ENCODE measurements at regions of chr12 and their contacts with region 1.

Region 1: GRCh38 chr12:6470375-6471163 is at the start of gene VAMP1:
- DNase-seq: peak; percentile 92
- ATAC-seq: peak; percentile 96
- H3K4me3 ChIP-seq: peak within 1 kb of the TSS; percentile 99
- H3K27ac ChIP-seq: peak within 1 kb of the TSS; percentile 63
- H3K4me1 ChIP-seq: peaks cover 18% of the 10 kb centered on the region
- H3K27me3 ChIP-seq: no peaks in the 10 kb centered on the region
- CTCF ChIP-seq: no peak
- EP300 ChIP-seq: no peak
- POLR2A ChIP-seq: peak; percentile 100
- RAD21 ChIP-seq: no peak
- polyA plus RNA-seq, gene VAMP1: 4.8 to 8.8 TPM

Region 2: GRCh38 chr12:6323340-6323994 is 147.1 kb before region 1 on chr12:
- CTCF ChIA-PET with region 1: interaction called, 27 read pairs
- POLR2A ChIA-PET with region 1: interaction called, 5 read pairs
- RAD21 ChIA-PET with region 1: interaction called, 15 read pairs
- SMC1A ChIA-PET with region 1: interaction called, 14 read pairs
- in situ Hi-C with region 1: no loop called
- intact Hi-C with region 1: loop called (anchors 5 kb)
- DNase-seq: peak; percentile 71
- ATAC-seq: peak; percentile 87
- H3K4me3 ChIP-seq: no peak overlapping the region
- H3K27ac ChIP-seq: peak overlapping the region; percentile 79
- H3K4me1 ChIP-seq: peaks cover 31% of the 10 kb centered on the region
- H3K27me3 ChIP-seq: no peaks in the 10 kb centered on the region
- CTCF ChIP-seq: peak; percentile 38 to 45 (median 45); a peak in 5 of 6 replicates
- EP300 ChIP-seq: peak; percentile 46 to 53; a peak in 1 of 4 replicates
- POLR2A ChIP-seq: 0 out of 2 replicates have a peak, but pooled peaks have one; percentile 18
- RAD21 ChIP-seq: peak; percentile 34

Region 3: GRCh38 chr12:6341417-6342139 is 129.0 kb before region 1 on chr12 and contains the start of gene TNFRSF1A:
- CTCF ChIA-PET with region 1: interaction called, 43 read pairs
- POLR2A ChIA-PET with region 1: interaction called, 22 read pairs
- RAD21 ChIA-PET with region 1: interaction called, 44 read pairs
- SMC1A ChIA-PET with region 1: interaction called, 39 read pairs
- in situ Hi-C with region 1: loop called (anchors 5 kb)
- intact Hi-C with region 1: loop called (anchors 2 kb)
- DNase-seq: no peak
- ATAC-seq: peak; percentile 59
- H3K4me3 ChIP-seq: peak within 1 kb of the TSS; percentile 97
- H3K27ac ChIP-seq: peak within 1 kb of the TSS; percentile 88
- H3K4me1 ChIP-seq: peaks cover 29% of the 10 kb centered on the region
- H3K27me3 ChIP-seq: no peaks in the 10 kb centered on the region
- CTCF ChIP-seq: no peak
- EP300 ChIP-seq: no peak
- POLR2A ChIP-seq: peak; percentile 78
- RAD21 ChIP-seq: no peak
- polyA plus RNA-seq, gene TNFRSF1A: 0.24 to 0.77 TPM

Region 4: DNA sequence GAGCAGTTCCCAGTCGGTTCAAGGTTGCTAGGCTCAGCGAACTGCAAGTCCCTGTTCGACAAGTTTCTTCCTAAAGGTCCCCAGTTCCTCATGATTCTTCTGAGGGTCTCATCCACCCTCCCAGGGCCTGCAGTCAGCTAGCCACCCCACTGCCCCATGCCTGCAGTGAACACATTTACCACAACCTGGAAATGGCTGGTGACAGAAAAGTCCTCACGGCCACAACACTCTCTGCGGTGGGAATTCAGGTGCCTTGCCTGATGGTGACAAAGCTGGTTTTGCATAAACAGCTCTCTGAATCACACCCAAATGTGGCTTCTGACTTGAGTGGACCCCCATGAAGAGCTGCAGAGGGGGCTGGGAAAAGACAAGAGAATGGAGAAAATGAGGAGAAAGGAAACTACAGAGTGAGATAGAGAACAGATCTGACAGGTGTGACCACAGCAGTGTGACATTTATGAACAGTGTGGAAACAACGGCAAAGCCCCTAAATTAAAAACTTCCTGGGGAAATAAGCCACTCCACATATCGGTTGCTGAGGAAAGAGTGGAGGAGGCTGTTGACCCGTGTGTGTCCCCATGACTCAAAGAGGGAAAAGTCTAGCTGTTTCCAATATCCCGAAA is 27.1 kb before region 1 on chr12:
- CTCF ChIA-PET with region 1: interaction called, 79 read pairs
- POLR2A ChIA-PET with region 1: interaction called, 384 read pairs
- RAD21 ChIA-PET with region 1: interaction called, 319 read pairs
- SMC1A ChIA-PET with region 1: interaction called, 67 read pairs
- in situ Hi-C with region 1: no loop called
- intact Hi-C with region 1: loop called (anchors 2 kb)
- DNase-seq: no peak
- ATAC-seq: peak; percentile 47
- H3K4me3 ChIP-seq: peak overlapping the region; percentile 66
- H3K27ac ChIP-seq: peak overlapping the region; percentile 99
- H3K4me1 ChIP-seq: peaks cover 46% of the 10 kb centered on the region
- H3K27me3 ChIP-seq: no peaks in the 10 kb centered on the region
- CTCF ChIP-seq: no peak
- EP300 ChIP-seq: peak in 1 of 2 experiments; percentile 75; a peak in 2 of 4 replicates
- POLR2A ChIP-seq: peak; percentile 68
- RAD21 ChIP-seq: no peak

Region 5: GRCh38 chr12:6533923-6534694 is 63.5 kb after region 1 on chr12 and contains the start of gene GAPDH:
- CTCF ChIA-PET with region 1: interaction called, 73 read pairs
- POLR2A ChIA-PET with region 1: interaction called, 14 read pairs
- RAD21 ChIA-PET with region 1: interaction called, 40 read pairs
- SMC1A ChIA-PET with region 1: interaction called, 50 read pairs
- in situ Hi-C with region 1: no loop called
- intact Hi-C with region 1: loop called (anchors 5 kb)
- DNase-seq: peak; percentile 80
- ATAC-seq: peak; percentile 76
- H3K4me3 ChIP-seq: peak within 1 kb of the TSS; percentile 83
- H3K27ac ChIP-seq: peak within 1 kb of the TSS; percentile 98
- H3K4me1 ChIP-seq: peaks cover 29% of the 10 kb centered on the region
- H3K27me3 ChIP-seq: no peaks in the 10 kb centered on the region
- CTCF ChIP-seq: no peak
- EP300 ChIP-seq: peak in 1 of 2 experiments; percentile 50; a peak in 1 of 4 replicates
- POLR2A ChIP-seq: peak; percentile 96
- RAD21 ChIP-seq: no peak
- polyA plus RNA-seq, gene GAPDH: 9,323 to 11,518 TPM

Region 6: GRCh38 chr12:7747246-7747645 is 1276.7 kb after region 1 on chr12 and contains the start of gene CLEC4C:
- CTCF ChIA-PET with region 1: no interaction called
- POLR2A ChIA-PET with region 1: no interaction called
- RAD21 ChIA-PET with region 1: no interaction called
- SMC1A ChIA-PET with region 1: no interaction called
- in situ Hi-C with region 1: no loop called
- intact Hi-C with region 1: no loop called
- DNase-seq: no peak
- ATAC-seq: no peak
- H3K4me3 ChIP-seq: no peak within 1 kb of the TSS
- H3K27ac ChIP-seq: peak within 1 kb of the TSS; percentile 39; the same call in 1 of the 2 replicates
- H3K4me1 ChIP-seq: peaks cover 24% of the 10 kb centered on the region
- H3K27me3 ChIP-seq: no peaks in the 10 kb centered on the region
- CTCF ChIP-seq: no peak
- EP300 ChIP-seq: no peak
- POLR2A ChIP-seq: no peak
- RAD21 ChIP-seq: no peak
- polyA plus RNA-seq, gene CLEC4C: 9.9 to 12.2 TPM

Measured in GM12878 (cell line).